MCF 10A (cell line): ENCODE measurements at regions of chr7 and their contacts with region 1.

Region 1: DNA sequence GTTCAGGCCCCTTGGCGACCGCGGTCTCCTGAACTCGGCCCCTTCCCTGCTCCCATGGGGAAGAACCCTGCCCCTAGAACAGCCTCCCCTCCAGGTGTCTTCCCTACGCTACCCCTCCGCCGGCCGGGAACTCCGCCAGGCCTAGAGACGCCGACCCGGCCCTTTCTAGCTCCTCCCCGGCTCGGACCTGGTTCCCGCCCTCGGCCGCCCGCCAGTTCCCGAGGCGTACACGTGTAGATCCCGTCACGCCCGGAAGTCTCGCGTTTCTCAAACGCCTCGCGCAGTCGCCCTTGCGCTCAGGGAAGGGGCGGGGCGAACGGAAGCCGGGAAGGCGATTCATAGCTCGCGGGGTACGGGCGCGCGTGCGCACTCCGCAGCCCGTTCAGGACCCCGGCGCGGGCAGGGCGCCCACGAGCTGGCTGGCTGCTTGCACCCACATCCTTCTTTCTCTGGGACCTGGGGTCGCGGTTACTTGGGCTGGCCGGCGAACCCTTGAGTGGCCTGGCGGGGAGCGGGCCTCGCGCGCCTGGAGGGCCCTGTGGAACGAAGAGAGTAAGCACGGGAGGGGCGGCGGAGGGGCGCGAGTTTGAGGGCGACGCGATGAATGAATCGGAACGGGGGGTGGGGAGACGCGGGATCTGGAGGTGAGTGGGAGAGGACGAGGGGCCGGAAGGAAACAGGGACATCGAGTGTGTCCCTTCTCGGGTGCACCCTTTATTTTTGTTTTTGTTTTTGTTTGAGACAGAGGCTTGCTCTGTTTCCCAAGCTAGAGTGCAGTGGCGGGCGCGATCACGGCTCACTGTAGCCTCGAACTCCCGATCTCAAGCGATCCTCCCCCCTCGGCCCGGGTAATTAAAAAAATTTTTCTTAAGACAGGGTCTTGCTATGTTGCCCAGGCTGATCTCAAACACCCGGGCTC is at the start of gene POP7:
- DNase-seq: peak; percentile 98
- H3K4me3 Mint-ChIP-seq: peak within 1 kb of the TSS; percentile 95
- H3K27ac Mint-ChIP-seq: peak within 1 kb of the TSS; percentile 93
- H3K4me1 Mint-ChIP-seq: peaks cover 10% of the 10 kb centered on the region
- H3K27me3 Mint-ChIP-seq: peaks cover 10% of the 10 kb centered on the region
- CTCF ChIP-seq: no peak
- total RNA-seq, gene POP7: 49.0 and 59.2 TPM in 2 replicates

Region 2: GRCh38 chr7:100353685-100354330 is 352.2 kb before region 1 on chr7:
- CTCF ChIA-PET with region 1: no interaction called
- POLR2A ChIA-PET with region 1: no interaction called
- intact Hi-C with region 1: no loop called
- DNase-seq: no peak
- H3K4me3 Mint-ChIP-seq: no peak overlapping the region
- H3K27ac Mint-ChIP-seq: no peak overlapping the region
- H3K4me1 Mint-ChIP-seq: no peaks in the 10 kb centered on the region
- H3K27me3 Mint-ChIP-seq: no peaks in the 10 kb centered on the region
- CTCF ChIP-seq: no peak

Region 3: GRCh38 chr7:100691676-100692577 is 14.1 kb before region 1 on chr7:
- CTCF ChIA-PET with region 1: interaction called, 94 read pairs
- POLR2A ChIA-PET with region 1: interaction called, 57 read pairs
- intact Hi-C with region 1: no loop called
- DNase-seq: peak; percentile 82
- H3K4me3 Mint-ChIP-seq: peak overlapping the region; percentile 93
- H3K27ac Mint-ChIP-seq: peak overlapping the region; percentile 92
- H3K4me1 Mint-ChIP-seq: peaks cover 19% of the 10 kb centered on the region
- H3K27me3 Mint-ChIP-seq: no peaks in the 10 kb centered on the region
- CTCF ChIP-seq: peak; percentile 81

Region 4: GRCh38 chr7:100726996-100727761 is 21.2 kb after region 1 on chr7:
- CTCF ChIA-PET with region 1: interaction called, 23 read pairs
- POLR2A ChIA-PET with region 1: interaction called, 14 read pairs
- intact Hi-C with region 1: no loop called
- DNase-seq: no peak
- H3K4me3 Mint-ChIP-seq: no peak overlapping the region
- H3K27ac Mint-ChIP-seq: no peak overlapping the region
- H3K4me1 Mint-ChIP-seq: peaks cover 12% of the 10 kb centered on the region
- H3K27me3 Mint-ChIP-seq: no peaks in the 10 kb centered on the region
- CTCF ChIP-seq: no peak

Region 5: GRCh38 chr7:100827330-100828227 is 121.6 kb after region 1 on chr7 and contains the start of gene EPHB4:
- CTCF ChIA-PET with region 1: interaction called, 10 read pairs
- POLR2A ChIA-PET with region 1: interaction called, 16 read pairs
- intact Hi-C with region 1: loop called (anchors 1 kb)
- DNase-seq: peak; percentile 80
- H3K4me3 Mint-ChIP-seq: peak within 1 kb of the TSS; percentile 96
- H3K27ac Mint-ChIP-seq: peak within 1 kb of the TSS; percentile 86
- H3K4me1 Mint-ChIP-seq: peaks cover 21% of the 10 kb centered on the region
- H3K27me3 Mint-ChIP-seq: no peaks in the 10 kb centered on the region
- CTCF ChIP-seq: peak; percentile 20
- total RNA-seq, gene EPHB4: 48.8 and 51.3 TPM in 2 replicates

Region 6: DNA sequence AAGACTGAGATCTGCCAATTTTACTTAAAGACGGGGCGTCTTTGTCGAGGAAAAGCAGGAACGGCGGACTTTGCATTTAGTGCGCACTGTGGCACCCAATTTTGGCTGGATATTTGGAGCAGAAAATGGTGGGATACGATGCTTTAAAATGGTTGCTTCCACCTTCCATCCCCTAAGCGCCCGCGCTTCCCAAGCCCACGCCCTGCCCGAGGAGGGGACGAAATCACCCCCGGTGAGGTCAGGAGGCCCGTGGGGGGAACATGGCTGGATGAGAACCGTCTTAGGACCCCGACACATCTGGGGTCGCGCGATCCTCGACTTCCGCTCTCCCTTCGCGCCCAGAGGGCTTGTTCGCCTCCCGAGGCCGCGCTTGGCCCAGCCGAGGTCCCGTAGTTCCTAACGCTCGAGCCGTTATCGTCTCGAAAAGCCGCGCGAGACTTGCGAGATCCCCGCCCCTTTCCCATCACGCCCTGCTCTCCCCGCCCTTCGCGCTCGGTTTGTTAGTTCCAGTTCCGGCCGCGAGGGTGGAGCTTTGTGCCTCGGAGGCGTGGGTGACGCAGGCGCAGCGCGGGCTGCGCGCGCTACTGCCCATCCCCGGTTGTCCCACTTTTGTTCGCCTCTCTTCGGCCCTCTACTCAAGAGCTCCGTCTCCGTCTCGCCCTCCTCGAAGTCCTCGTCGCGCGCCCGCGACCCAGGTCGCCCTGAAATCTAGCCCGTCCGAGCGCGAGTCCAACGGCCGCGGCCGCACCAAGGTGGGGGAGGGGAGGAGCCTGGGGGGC is 168.8 kb after region 1 on chr7 and contains the start of gene SRRT:
- CTCF ChIA-PET with region 1: interaction called, 6 read pairs
- POLR2A ChIA-PET with region 1: interaction called, 13 read pairs
- intact Hi-C with region 1: no loop called
- DNase-seq: peak; percentile 99
- H3K4me3 Mint-ChIP-seq: peak within 1 kb of the TSS; percentile 97
- H3K27ac Mint-ChIP-seq: peak within 1 kb of the TSS; percentile 98
- H3K4me1 Mint-ChIP-seq: peaks cover 30% of the 10 kb centered on the region
- H3K27me3 Mint-ChIP-seq: no peaks in the 10 kb centered on the region
- CTCF ChIP-seq: no peak
- total RNA-seq, gene SRRT: 111 and 142 TPM in 2 replicates